ENCODE measurements at regions of chrX and their contacts with region 1.

Region 1: GRCh38 chrX:24838629-24839028 is 144.9 kb downstream of the POLA1 start:
- DNase-seq: peak; percentile 23
- ATAC-seq: no peak
- H3K4me3 Mint-ChIP-seq: no peak overlapping the region
- H3K27ac Mint-ChIP-seq: no peak overlapping the region
- H3K4me1 Mint-ChIP-seq: peaks cover 4% of the 10 kb centered on the region
- H3K27me3 Mint-ChIP-seq: no peaks in the 10 kb centered on the region

Region 2: DNA sequence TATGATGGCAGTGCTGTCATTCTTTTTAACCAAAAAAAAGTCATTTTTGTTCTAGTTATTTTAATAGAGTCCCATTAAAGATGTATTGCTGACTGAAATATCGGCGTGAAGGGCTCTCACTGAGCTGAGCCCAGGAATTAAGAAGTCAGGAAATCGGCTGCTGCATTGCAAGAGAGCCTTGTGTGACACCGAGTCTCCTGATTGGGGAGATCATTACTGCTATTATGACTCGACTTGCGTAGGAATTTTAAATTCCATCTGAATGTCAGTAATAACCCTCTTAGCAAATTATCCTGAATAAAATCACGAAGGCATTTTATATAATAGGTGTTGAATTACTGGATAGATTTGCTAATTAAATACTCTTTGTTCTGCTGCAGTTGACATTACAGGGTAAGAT is 33.4 kb before region 1 on chrX:
- CTCF ChIA-PET with region 1: no interaction called
- POLR2A ChIA-PET with region 1: no interaction called
- DNase-seq: no peak
- ATAC-seq: no peak
- H3K4me3 Mint-ChIP-seq: no peak overlapping the region
- H3K27ac Mint-ChIP-seq: no peak overlapping the region
- H3K4me1 Mint-ChIP-seq: peaks cover 11% of the 10 kb centered on the region
- H3K27me3 Mint-ChIP-seq: no peaks in the 10 kb centered on the region

Region 3: GRCh38 chrX:24828147-24828546 is 10.5 kb before region 1 on chrX:
- CTCF ChIA-PET with region 1: interaction called, 12 read pairs
- POLR2A ChIA-PET with region 1: no interaction called
- DNase-seq: no peak
- ATAC-seq: no peak
- H3K4me3 Mint-ChIP-seq: no peak overlapping the region
- H3K27ac Mint-ChIP-seq: no peak overlapping the region
- H3K4me1 Mint-ChIP-seq: no peaks in the 10 kb centered on the region
- H3K27me3 Mint-ChIP-seq: no peaks in the 10 kb centered on the region

Region 4: GRCh38 chrX:25020905-25021449 is 182.3 kb after region 1 on chrX:
- CTCF ChIA-PET with region 1: interaction called, 16 read pairs
- POLR2A ChIA-PET with region 1: no interaction called
- DNase-seq: peak; percentile 30
- ATAC-seq: peak; percentile 73
- H3K4me3 Mint-ChIP-seq: no peak overlapping the region
- H3K27ac Mint-ChIP-seq: no peak overlapping the region
- H3K4me1 Mint-ChIP-seq: peaks cover 19% of the 10 kb centered on the region
- H3K27me3 Mint-ChIP-seq: peaks cover 66% of the 10 kb centered on the region

Region 5: GRCh38 chrX:25144043-25144940 is 305.7 kb after region 1 on chrX:
- CTCF ChIA-PET with region 1: interaction called, 33 read pairs
- POLR2A ChIA-PET with region 1: no interaction called
- DNase-seq: peak; percentile 34
- ATAC-seq: no peak
- H3K4me3 Mint-ChIP-seq: no peak overlapping the region
- H3K27ac Mint-ChIP-seq: no peak overlapping the region
- H3K4me1 Mint-ChIP-seq: no peaks in the 10 kb centered on the region
- H3K27me3 Mint-ChIP-seq: peaks cover 15% of the 10 kb centered on the region